Esophagus muscularis mucosa (tissue), 4 donors: ENCODE measurements at regions of chr2 and their contacts with region 1.

Region 1: DNA sequence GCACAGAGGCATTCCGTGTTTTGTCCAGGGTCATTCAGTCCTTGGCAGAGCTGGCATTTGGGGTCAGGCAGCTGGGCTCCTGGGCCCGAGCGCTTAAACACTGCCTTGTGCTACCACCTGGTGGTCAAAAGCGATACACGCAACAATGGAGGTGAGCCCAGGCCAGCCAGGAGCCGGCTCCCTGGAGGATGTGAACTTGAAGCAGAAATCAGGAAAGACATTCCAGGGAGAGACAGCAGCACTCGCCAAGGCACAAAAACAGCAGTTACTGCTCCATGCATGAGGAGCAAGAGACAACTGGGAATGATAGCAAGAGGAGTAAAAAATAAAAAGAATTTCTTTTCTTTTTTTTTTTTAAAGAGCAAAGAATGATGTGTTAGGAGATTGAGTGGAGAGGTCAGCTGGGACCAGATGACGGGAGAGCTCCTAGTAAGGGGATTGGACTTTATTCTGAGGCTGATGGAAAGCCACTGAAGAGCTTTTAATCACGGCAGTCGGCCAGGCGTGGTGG is 20.7 kb downstream of the SCYGR8 start:
- DNase-seq: no peak
- H3K4me3 ChIP-seq: no peak overlapping the region
- H3K27ac ChIP-seq: peak overlapping the region in 1 of 4 donors; percentile 32
- H3K4me1 ChIP-seq: peaks cover 0 to 9% (median 8%) of the 10 kb centered on the region in 4 donors
- H3K27me3 ChIP-seq: no peaks in the 10 kb centered on the region
- CTCF ChIP-seq: peak; percentile 83 to 94 (median 88)
- EP300 ChIP-seq: no peak
- POLR2A ChIP-seq: no peak

Region 2: DNA sequence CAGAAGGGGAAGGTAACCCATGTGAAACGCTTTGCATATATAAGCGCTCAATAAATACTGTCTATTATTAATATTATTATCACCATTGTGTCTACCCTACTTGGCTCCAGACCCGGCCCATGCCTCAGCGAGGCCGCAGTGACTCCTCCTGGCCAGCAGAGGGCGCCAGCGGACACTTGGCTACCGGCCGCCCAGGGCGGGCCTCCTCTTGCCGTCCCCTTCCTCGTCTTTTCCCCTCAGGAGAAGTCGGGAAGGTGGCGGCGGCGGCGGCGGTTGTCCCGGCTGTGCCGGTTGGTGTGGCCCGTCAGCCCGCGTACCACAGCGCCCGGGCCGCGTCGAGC is 294.5 kb before region 1 on chr2 and contains the start of gene AGFG1:
- intact Hi-C with region 1: loop called (anchors 5 kb)
- DNase-seq: peak; percentile 93
- H3K4me3 ChIP-seq: peak within 1 kb of the TSS; percentile 97 to 99 (median 98)
- H3K27ac ChIP-seq: peak within 1 kb of the TSS; percentile 92 to 94 (median 94)
- H3K4me1 ChIP-seq: peaks cover 11 to 40% (median 37%) of the 10 kb centered on the region in 4 donors
- H3K27me3 ChIP-seq: no peaks in the 10 kb centered on the region
- CTCF ChIP-seq: peak; percentile 97 to 100 (median 98)
- EP300 ChIP-seq: no peak
- POLR2A ChIP-seq: peak; percentile 22
- total RNA-seq, gene AGFG1: 27.4 to 73.4 (median 52.7) TPM